Astrocyte of the cerebellum (primary cell): ENCODE measurements at regions of chrX and their contacts with region 1.

Region 1: GRCh38 chrX:37627602-37628001 is 56.1 kb downstream of the LANCL3 start:
- DNase-seq: no peak
- H3K4me3 ChIP-seq: no peak overlapping the region
- CTCF ChIP-seq: no peak

Region 2: GRCh38 chrX:37685452-37686353 is 58.1 kb after region 1 on chrX and contains the start of gene XK:
- in situ Hi-C with region 1: loop called (anchors 5 kb)
- DNase-seq: no peak
- H3K4me3 ChIP-seq: peak within 1 kb of the TSS; percentile 38
- CTCF ChIP-seq: no peak

Region 3: DNA sequence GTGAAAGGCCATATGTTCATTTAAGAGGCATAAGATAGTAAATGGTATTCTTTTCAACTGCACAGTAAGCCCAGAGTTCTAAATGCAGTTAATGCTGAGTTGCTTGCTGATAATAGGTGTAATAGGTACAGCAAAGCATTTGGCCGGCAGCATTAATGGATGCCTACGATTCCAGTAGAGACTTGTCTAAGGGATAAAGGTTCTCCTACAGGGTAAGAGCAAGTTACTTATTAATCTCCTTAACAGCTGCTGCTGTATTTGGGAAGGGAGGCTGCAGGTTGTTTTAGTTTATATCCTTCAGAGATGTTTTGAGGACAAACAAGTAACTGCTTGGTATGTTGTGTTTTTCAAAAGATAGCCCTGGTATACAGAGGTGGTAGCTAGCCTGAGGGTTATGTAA is 950.6 kb after region 1 on chrX:
- in situ Hi-C with region 1: no loop called
- DNase-seq: no peak
- H3K4me3 ChIP-seq: no peak overlapping the region
- CTCF ChIP-seq: no peak